Astrocyte of the cerebellum (primary cell): ENCODE measurements at regions of chr2 and their contacts with region 1.

Region 1: GRCh38 chr2:10900216-10901109 is 11.3 kb upstream of the KCNF1 start:
- DNase-seq: no peak
- H3K4me3 ChIP-seq: no peak overlapping the region
- CTCF ChIP-seq: peak; percentile 37

Region 2: GRCh38 chr2:9423922-9424272 is 1476.6 kb before region 1 on chr2:
- in situ Hi-C with region 1: no loop called
- DNase-seq: no peak
- H3K4me3 ChIP-seq: peak overlapping the region; percentile 98
- CTCF ChIP-seq: no peak

Region 3: DNA sequence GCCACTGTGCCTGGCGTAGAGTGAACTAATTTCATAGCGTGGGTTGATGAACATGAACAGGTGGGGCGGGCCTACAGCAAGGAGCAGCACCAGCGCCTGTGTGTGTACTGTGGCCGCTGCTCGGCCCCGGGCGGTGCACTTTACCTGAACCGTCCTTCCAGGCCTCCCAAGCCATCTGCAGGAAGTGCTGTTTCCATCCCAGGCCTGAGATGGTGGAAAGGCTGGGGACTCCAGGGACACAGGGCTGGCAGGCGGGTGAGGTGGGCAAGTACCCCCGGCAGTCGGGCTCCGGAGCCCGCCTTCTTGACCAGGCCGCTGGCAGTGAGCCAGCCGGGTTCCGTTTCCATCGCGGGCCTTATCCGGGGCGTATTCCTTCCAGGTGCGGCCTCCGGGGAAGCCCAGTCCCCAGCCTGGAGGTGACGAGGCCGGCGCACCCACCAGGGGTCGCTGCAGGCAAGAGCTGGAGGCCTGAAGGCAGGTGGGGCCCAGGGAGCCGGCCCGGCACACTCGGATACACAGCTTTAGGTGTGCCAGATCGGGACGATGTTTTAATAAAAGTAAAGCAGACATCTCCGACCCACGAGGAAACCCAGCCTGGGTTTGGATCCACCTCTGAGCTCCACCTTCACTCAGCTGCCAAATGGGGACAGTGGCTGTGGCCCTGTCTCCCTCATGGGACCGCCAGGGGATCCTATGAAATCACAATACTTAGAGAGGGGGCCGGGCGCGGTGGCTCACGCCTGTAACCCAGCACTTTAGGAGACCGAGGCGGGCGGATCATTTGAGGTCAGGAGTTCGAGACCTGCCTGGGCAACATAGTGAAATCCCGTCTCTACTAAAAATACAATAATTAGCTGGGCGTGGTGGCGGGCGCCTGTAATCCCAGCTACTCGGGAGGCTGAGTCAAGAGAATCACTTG is 65.2 kb before region 1 on chr2:
- in situ Hi-C with region 1: loop called (anchors 5 kb)
- DNase-seq: no peak
- H3K4me3 ChIP-seq: no peak overlapping the region
- CTCF ChIP-seq: peak; percentile 80

Region 4: GRCh38 chr2:10935953-10936942 is 35.8 kb after region 1 on chr2:
- in situ Hi-C with region 1: no loop called
- DNase-seq: peak; percentile 79
- H3K4me3 ChIP-seq: no peak overlapping the region
- CTCF ChIP-seq: no peak

Region 5: GRCh38 chr2:10954876-10955754 is 54.7 kb after region 1 on chr2:
- in situ Hi-C with region 1: no loop called
- DNase-seq: no peak
- H3K4me3 ChIP-seq: no peak overlapping the region
- CTCF ChIP-seq: no peak

Region 6: DNA sequence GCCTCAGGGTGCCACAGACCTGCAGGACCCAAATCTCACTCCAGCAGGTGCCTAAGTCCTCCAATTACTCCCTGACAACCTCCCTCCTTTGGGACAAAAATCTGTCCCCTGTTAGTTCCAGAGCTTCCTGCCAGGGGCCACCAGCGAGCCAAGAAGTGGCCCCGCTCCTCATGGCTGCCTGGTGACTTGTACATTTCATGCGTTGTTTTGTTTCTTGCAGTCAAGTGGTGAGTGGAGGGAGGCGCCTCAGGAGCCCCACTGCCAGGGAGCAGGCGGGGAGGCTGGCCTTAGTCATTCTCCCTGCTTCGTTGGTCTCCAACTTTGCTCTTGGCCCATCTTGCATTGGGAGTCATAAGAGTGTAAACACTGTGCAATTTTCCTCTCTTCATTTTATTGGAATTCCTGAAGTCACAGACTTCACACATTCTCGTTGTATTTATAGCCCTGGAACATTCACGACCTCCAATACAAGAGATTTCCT is 92.6 kb after region 1 on chr2:
- in situ Hi-C with region 1: no loop called
- DNase-seq: no peak
- H3K4me3 ChIP-seq: no peak overlapping the region
- CTCF ChIP-seq: no peak